Activated naive CD4-positive, alpha-beta T cell treated with anti-CD3 and anti-CD28 coated beads for 36 hours (primary cell): ENCODE measurements at regions of chr11 and their contacts with region 1.

Region 1: DNA sequence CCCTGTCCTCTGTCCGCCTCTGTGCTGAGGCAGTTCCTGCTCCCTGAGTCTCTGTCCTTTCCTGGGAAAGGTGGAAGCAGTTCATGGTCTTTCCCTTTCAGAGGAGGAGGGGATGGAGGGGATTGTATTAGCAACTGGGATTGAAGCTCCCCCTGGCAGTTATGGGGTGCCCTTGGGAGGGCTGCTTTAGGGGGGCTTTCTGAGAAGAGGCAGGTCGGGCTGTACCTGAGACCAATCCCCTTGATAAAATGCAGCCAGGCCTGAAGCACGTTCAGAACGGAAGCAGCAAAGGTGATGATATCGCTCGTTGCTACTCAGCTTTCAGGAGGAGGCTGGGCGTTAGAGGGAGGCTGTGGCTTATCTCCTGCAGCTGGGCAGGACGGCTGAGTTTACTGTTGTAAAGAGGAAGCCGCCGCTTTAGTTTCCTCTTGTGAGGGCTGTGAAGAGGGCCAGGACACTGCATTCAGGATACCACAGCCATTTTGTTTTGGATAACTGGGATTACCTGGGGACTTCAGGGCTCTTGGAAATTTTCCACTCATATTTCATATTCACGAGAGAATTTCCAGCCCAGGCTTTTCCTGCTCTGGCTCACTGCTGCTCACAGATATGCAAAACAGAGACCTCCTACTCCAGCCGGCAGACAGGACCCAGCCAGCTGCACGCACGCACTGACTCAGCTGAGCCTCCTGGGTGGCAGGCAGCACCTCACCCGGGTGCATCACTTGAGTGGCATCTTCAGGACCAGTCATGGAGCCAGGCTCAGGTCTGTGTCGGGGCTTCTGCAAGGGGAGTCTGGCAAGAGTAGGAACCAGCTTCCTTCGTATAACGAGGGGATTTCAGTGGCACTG is 798 bp downstream of the AMPD3 start:
- DNase-seq: peak; percentile 87
- H3K4me3 Mint-ChIP-seq: peak overlapping the region; percentile 82
- H3K27ac Mint-ChIP-seq: peak overlapping the region; percentile 93
- H3K4me1 Mint-ChIP-seq: peaks cover 85% of the 10 kb centered on the region
- H3K27me3 Mint-ChIP-seq: no peaks in the 10 kb centered on the region

Region 2: DNA sequence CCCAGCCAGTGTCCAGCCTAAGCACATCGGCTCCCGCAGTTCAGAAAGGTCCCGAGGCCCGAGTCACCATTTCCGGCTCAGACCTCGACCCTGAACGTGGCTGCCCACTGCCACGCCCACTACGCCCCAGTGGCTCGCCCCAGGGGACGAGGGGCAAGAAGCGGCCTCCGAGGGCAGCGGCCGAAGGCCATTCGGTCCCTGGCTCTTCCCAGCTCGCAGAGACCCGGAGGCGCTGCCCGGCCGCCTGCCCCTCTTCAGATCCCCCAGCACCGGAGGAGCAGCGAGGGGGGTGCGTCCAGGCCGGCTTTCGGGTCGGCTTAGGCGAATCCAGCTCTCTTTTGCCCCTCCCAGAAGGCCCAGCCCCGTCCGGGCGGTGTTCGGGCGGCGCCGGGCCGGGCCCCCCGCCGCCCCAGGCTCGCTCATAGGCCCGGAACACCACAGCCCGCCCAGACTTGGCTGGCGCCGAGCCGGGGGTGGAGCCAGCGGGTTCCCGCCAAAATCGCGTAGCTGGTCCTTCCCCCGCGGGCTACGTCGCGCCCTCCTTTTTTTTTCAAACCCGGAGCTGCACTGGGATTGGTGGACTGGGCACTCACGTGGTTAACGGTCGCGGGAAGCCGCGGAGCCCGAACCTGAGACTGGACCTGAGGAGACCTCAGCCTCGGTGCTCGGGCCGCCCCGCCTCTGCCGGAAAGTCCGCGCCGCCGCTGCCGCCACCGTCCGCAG is 882.6 kb before region 1 on chr11 and contains the start of gene WEE1:
- CTCF ChIA-PET with region 1: no interaction called
- intact Hi-C with region 1: loop called (anchors 10 kb)
- DNase-seq: peak; percentile 99
- H3K4me3 Mint-ChIP-seq: peak within 1 kb of the TSS; percentile 93
- H3K27ac Mint-ChIP-seq: peak within 1 kb of the TSS; percentile 77
- H3K4me1 Mint-ChIP-seq: peaks cover 27% of the 10 kb centered on the region
- H3K27me3 Mint-ChIP-seq: peaks cover 10% of the 10 kb centered on the region
- total RNA-seq, gene WEE1: 41.8 to 46.6 TPM

Region 3: GRCh38 chr11:10444725-10445315 is 11.0 kb before region 1 on chr11:
- CTCF ChIA-PET with region 1: interaction called, 8 read pairs
- intact Hi-C with region 1: loop called (anchors 1 kb)
- DNase-seq: peak; percentile 60
- H3K4me3 Mint-ChIP-seq: no peak overlapping the region
- H3K27ac Mint-ChIP-seq: no peak overlapping the region
- H3K4me1 Mint-ChIP-seq: peaks cover 37% of the 10 kb centered on the region
- H3K27me3 Mint-ChIP-seq: no peaks in the 10 kb centered on the region

Region 4: GRCh38 chr11:10526974-10527918 is 71.4 kb after region 1 on chr11:
- CTCF ChIA-PET with region 1: interaction called, 3 read pairs
- intact Hi-C with region 1: loop called (anchors 2 kb)
- DNase-seq: no peak
- H3K4me3 Mint-ChIP-seq: no peak overlapping the region
- H3K27ac Mint-ChIP-seq: peak overlapping the region; percentile 70
- H3K4me1 Mint-ChIP-seq: peaks cover 19% of the 10 kb centered on the region
- H3K27me3 Mint-ChIP-seq: no peaks in the 10 kb centered on the region

Region 5: GRCh38 chr11:10750838-10751580 is 295.1 kb after region 1 on chr11 and contains the start of gene CTR9:
- CTCF ChIA-PET with region 1: no interaction called
- intact Hi-C with region 1: loop called (anchors 1 kb)
- DNase-seq: peak; percentile 95
- H3K4me3 Mint-ChIP-seq: peak within 1 kb of the TSS; percentile 93
- H3K27ac Mint-ChIP-seq: peak within 1 kb of the TSS; percentile 87
- H3K4me1 Mint-ChIP-seq: peaks cover 14% of the 10 kb centered on the region
- H3K27me3 Mint-ChIP-seq: no peaks in the 10 kb centered on the region
- total RNA-seq, gene CTR9: 28.7 to 29.7 TPM

Region 6: DNA sequence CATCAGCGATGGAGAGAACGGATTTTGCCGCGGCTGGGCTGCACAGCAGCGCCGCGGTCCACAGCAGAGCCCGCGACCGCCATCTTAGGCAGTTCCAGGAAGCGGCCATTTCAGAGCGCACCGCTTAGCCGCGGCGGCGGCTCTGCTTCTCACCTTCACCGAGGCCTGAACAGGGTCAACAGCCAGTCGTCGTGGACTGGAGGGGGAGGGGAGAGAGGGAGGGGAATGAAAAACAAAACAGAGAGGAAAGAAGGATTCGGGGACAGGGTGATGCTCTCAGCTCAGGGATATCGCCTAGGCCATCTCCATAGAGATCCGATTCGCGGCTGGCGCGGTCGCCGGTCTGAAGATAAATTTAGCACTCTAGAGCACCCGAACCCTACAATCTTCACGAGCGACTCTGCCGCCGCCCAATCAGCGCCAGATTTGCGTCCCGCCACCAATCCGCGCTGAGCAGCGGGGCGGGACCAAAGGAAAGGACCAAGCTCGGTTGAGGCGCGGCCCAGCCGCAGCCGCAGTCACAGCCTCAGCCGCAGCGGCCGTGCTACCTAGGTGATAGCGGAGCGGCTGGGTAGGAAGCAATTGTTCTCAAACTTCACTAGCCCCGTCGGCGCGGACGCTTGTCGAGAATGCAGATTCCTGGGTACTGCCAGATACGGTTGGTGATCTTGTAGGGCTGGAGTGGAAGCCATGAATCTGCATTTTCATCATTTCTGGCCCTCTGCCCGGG is 402.0 kb after region 1 on chr11 and contains the start of gene ZBED5:
- CTCF ChIA-PET with region 1: no interaction called
- intact Hi-C with region 1: loop called (anchors 1 kb)
- DNase-seq: peak; percentile 96
- H3K4me3 Mint-ChIP-seq: peak within 1 kb of the TSS; percentile 100
- H3K27ac Mint-ChIP-seq: peak within 1 kb of the TSS; percentile 100
- H3K4me1 Mint-ChIP-seq: peaks cover 46% of the 10 kb centered on the region
- H3K27me3 Mint-ChIP-seq: no peaks in the 10 kb centered on the region
- total RNA-seq, gene ZBED5: 50.4 to 52.4 TPM

Region 7: DNA sequence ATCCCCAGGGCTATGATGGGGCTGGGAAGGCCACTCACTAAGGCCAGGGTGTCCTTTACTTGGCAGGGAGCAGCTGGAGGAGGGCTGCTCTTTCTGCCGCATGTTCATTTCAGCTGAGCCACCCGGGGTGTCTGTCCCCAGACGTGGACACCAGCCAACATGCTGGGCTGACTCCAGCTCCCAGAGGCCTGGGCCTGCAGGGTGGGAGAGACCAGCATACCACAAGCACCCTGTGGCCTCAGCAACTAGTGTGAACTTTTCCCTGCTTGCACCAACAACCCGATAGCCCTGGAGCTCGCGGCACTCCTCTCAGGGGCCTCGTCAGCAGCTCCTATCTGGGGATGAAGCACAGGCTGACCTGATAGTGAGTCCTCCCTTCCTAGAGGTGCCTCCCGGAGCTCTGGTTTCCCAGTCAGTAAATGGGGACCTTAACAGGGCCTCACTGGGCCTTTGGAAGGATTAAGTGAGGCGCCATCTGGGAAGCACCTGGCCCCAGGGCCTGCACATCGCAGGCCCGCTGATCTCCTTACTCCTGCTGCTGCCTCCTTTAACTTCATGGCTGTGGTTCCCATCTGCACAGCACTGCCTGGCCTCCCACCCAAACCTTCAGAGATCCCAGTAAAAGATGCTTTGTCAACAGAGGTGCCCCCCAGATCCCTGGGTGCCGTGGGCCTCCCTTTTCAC is 1082.6 kb after region 1 on chr11:
- CTCF ChIA-PET with region 1: no interaction called
- intact Hi-C with region 1: no loop called
- DNase-seq: no peak
- H3K4me3 Mint-ChIP-seq: no peak overlapping the region
- H3K27ac Mint-ChIP-seq: no peak overlapping the region
- H3K4me1 Mint-ChIP-seq: no peaks in the 10 kb centered on the region
- H3K27me3 Mint-ChIP-seq: peaks cover 2% of the 10 kb centered on the region